Mammary epithelial cell (primary cell): ENCODE measurements at regions of chr2 and their contacts with region 1.

Region 1: DNA sequence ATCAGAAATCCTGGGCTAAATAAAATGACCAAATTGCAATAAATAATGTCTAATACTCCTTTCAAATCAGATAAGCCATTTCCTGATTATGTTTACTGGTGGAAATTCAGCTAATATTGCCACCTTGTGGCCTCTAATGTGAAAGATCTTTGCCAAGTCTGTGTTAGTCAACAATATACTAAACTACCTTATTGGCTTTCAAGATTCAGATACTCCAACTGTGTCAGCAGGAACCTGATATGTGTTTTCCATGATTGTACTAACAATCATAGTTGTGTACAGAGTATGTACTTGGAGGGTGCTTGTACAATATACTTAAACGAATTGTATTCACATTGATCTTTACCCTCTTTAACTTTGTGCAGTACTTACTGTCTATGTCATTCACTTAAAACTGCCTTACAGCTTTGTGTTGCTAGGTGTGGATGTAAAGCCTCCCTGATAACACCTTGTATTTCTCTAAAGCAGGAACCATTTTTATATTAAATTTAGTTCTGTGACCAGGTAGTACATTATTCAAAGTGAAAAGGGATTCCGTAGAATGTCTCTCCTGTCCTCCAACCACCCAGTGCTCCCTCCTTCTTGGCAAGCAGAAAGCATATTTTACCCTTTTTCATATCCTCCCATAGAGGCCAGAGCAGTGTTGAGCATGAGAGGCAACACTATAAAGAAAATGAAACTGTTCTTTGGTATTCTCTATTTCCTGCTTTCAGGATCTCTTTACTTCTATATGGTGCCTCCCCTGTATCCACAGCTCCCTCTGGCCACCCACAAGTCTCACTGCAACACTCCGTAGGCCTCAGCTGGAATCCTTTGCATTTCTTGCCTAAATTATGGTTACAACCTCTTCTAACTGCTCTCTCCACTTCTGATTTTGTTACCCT is 75.2 kb upstream of the C2orf15 start:
- DNase-seq: peak; percentile 49
- H3K4me3 ChIP-seq: peak overlapping the region in 2 of 3 experiments; percentile 4 to 16
- H3K27ac ChIP-seq: peak overlapping the region; percentile 18
- H3K4me1 ChIP-seq: peaks cover 5% of the 10 kb centered on the region
- H3K27me3 ChIP-seq: no peaks in the 10 kb centered on the region
- CTCF ChIP-seq: peak; percentile 65 to 72

Region 2: GRCh38 chr2:98412751-98413458 is 653.4 kb before region 1 on chr2:
- CTCF ChIA-PET with region 1: no interaction called
- dilution Hi-C with region 1: no loop called
- in situ Hi-C with region 1: loop called (anchors 25 kb)
- intact Hi-C with region 1: loop called (anchors 1 kb)
- DNase-seq: peak; percentile 41
- H3K4me3 ChIP-seq: no peak overlapping the region
- H3K27ac ChIP-seq: no peak overlapping the region
- H3K4me1 ChIP-seq: no peaks in the 10 kb centered on the region
- H3K27me3 ChIP-seq: no peaks in the 10 kb centered on the region
- CTCF ChIP-seq: peak; percentile 39 to 73

Region 3: GRCh38 chr2:98608116-98608999 is 458.0 kb before region 1 on chr2 and contains the starts of genes COA5 and UNC50:
- CTCF ChIA-PET with region 1: no interaction called
- dilution Hi-C with region 1: no loop called
- in situ Hi-C with region 1: no loop called
- intact Hi-C with region 1: loop called (anchors 1 kb)
- DNase-seq: peak; percentile 88
- H3K4me3 ChIP-seq: peak within 1 kb of the TSS; percentile 77 to 92 (median 91)
- H3K27ac ChIP-seq: peak within 1 kb of the TSS; percentile 89
- H3K4me1 ChIP-seq: peaks cover 22% of the 10 kb centered on the region
- H3K27me3 ChIP-seq: no peaks in the 10 kb centered on the region
- CTCF ChIP-seq: peak in 1 of 2 donors; percentile 10
- total RNA-seq, gene COA5: 16.5 to 20.5 TPM
- total RNA-seq, gene UNC50: 33.0 to 38.4 TPM

Region 4: GRCh38 chr2:98731041-98731893 is 335.1 kb before region 1 on chr2 and contains the start of gene MGAT4A:
- CTCF ChIA-PET with region 1: no interaction called
- dilution Hi-C with region 1: no loop called
- in situ Hi-C with region 1: no loop called
- intact Hi-C with region 1: loop called (anchors 2 kb)
- DNase-seq: peak; percentile 43
- H3K4me3 ChIP-seq: peak within 1 kb of the TSS; percentile 65 to 72 (median 68)
- H3K27ac ChIP-seq: no peak within 1 kb of the TSS
- H3K4me1 ChIP-seq: peaks cover 17% of the 10 kb centered on the region
- H3K27me3 ChIP-seq: no peaks in the 10 kb centered on the region
- CTCF ChIP-seq: no peak
- total RNA-seq, gene MGAT4A: 2.0 to 4.3 TPM

Region 5: DNA sequence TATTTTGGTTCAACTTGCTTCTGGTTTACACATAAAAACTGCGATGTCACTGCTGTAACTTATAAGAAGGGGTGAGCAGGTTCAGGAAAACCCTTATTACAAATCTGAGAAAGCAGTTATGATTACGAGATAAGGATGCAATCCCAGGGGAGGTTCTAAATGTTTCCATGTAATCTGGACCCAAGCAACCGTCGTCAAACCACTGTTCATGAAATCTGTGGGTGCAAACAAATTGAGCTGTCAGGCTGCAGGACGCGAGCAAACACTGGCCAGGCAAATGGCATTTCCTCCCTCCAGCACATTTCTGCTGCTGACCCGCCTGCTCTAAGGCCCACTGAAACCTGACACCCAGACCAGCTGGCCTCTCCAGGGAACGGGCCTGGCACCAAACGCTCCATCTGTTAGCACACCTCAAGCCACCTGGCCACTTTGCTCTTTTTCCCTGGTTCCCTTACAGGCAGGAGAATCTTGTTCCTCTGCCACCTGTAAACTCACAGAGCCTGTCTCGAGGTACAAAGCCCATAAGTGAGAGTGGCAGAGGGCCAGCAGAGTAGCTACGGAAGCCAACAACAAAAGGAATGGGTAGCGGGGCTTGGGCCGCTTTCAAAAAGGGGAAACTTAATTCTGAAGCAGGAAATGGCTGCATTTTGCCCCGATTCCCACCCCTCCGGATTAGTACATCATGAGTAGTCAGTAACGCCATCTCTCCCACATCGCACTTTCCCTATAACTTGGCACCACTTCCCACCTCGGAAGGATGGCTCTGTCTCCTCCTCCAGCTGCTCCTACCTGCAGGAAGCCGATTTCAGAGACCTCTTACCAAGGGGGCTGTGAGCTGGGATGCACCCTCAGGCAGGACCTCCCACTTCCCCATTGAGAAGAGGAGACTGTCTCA is 156.8 kb before region 1 on chr2:
- CTCF ChIA-PET with region 1: no interaction called
- dilution Hi-C with region 1: no loop called
- in situ Hi-C with region 1: no loop called
- intact Hi-C with region 1: loop called (anchors 1 kb)
- DNase-seq: peak; percentile 54
- H3K4me3 ChIP-seq: no peak overlapping the region
- H3K27ac ChIP-seq: peak overlapping the region; percentile 48
- H3K4me1 ChIP-seq: peaks cover 65% of the 10 kb centered on the region
- H3K27me3 ChIP-seq: no peaks in the 10 kb centered on the region
- CTCF ChIP-seq: no peak